ENCODE measurements at regions of chr10 and their contacts with region 1.

Region 1: GRCh38 chr10:52818019-52818418 is 45.4 kb upstream of the MBL2 start:
- DNase-seq: peak; percentile 100
- ATAC-seq: peak; percentile 82
- H3K4me3 ChIP-seq: no peak overlapping the region
- H3K27ac ChIP-seq: no peak overlapping the region
- H3K4me1 ChIP-seq: peaks cover 21% of the 10 kb centered on the region
- H3K27me3 ChIP-seq: no peaks in the 10 kb centered on the region
- CTCF ChIP-seq: peak; percentile 100

Region 2: DNA sequence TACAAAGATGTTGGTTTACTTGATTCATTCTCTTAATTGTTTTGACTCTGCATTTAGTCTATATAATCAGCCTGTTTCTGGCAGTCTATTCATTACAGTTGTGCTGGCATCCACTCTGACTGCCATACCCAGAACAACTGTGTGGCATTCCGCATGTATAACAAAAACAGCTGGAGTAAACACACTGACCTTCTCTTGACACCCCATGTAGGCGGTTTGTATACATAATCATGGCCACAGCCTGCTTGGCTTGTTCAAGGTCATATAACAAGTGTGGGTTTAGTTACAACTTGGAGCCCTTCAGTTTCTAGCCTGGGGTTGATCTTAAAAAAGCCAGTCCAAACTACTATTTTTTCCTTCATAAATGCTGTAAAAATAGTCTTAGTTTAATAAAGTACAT is 116.4 kb before region 1 on chr10:
- CTCF ChIA-PET with region 1: no interaction called
- POLR2A ChIA-PET with region 1: no interaction called
- intact Hi-C with region 1: no loop called
- DNase-seq: no peak
- ATAC-seq: no peak
- H3K4me3 ChIP-seq: no peak overlapping the region
- H3K27ac ChIP-seq: no peak overlapping the region
- H3K4me1 ChIP-seq: peaks cover 32% of the 10 kb centered on the region
- H3K27me3 ChIP-seq: no peaks in the 10 kb centered on the region
- CTCF ChIP-seq: no peak

Region 3: GRCh38 chr10:52779541-52780390 is 38.3 kb before region 1 on chr10:
- CTCF ChIA-PET with region 1: interaction called, 19 read pairs
- POLR2A ChIA-PET with region 1: no interaction called
- intact Hi-C with region 1: no loop called
- DNase-seq: peak; percentile 99
- ATAC-seq: peak; percentile 94
- H3K4me3 ChIP-seq: no peak overlapping the region
- H3K27ac ChIP-seq: no peak overlapping the region
- H3K4me1 ChIP-seq: no peaks in the 10 kb centered on the region
- H3K27me3 ChIP-seq: no peaks in the 10 kb centered on the region
- CTCF ChIP-seq: peak; percentile 100

Region 4: GRCh38 chr10:52864201-52865106 is 46.4 kb after region 1 on chr10:
- CTCF ChIA-PET with region 1: interaction called, 61 read pairs
- POLR2A ChIA-PET with region 1: interaction called, 8 read pairs
- intact Hi-C with region 1: loop called (anchors 1 kb)
- DNase-seq: peak; percentile 100
- ATAC-seq: peak; percentile 100
- H3K4me3 ChIP-seq: no peak overlapping the region
- H3K27ac ChIP-seq: peak overlapping the region; percentile 81
- H3K4me1 ChIP-seq: peaks cover 22% of the 10 kb centered on the region
- H3K27me3 ChIP-seq: no peaks in the 10 kb centered on the region
- CTCF ChIP-seq: no peak

Region 5: DNA sequence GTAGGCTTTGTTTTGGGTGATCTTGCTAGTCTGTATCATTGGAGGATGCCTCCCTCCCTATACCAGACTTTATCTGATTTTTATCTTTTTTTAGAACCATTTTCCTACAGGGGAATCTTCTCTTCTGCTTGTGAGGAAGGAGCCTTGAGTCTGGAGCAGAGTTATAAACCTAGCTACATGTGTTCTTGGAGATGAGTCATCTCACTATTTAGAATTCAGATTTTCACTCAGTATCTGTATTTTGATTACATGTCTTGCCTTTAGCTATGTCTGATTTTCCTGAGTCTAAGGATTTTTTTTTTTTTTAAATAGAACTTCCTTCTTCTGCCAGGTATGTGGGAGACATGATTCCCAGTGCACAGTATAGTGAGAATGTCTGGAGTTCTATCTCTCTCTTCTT is 166.2 kb after region 1 on chr10:
- CTCF ChIA-PET with region 1: no interaction called
- POLR2A ChIA-PET with region 1: no interaction called
- intact Hi-C with region 1: no loop called
- DNase-seq: no peak
- ATAC-seq: peak; percentile 75
- H3K4me3 ChIP-seq: no peak overlapping the region
- H3K27ac ChIP-seq: no peak overlapping the region
- H3K4me1 ChIP-seq: no peaks in the 10 kb centered on the region
- H3K27me3 ChIP-seq: no peaks in the 10 kb centered on the region
- CTCF ChIP-seq: no peak

Region 6: GRCh38 chr10:53025172-53025711 is 207.2 kb after region 1 on chr10:
- CTCF ChIA-PET with region 1: interaction called, 4 read pairs
- POLR2A ChIA-PET with region 1: no interaction called
- intact Hi-C with region 1: loop called (anchors 2 kb)
- DNase-seq: peak; percentile 85
- ATAC-seq: peak; percentile 81
- H3K4me3 ChIP-seq: peak overlapping the region; percentile 60
- H3K27ac ChIP-seq: peak overlapping the region; percentile 9
- H3K4me1 ChIP-seq: peaks cover 40% of the 10 kb centered on the region
- H3K27me3 ChIP-seq: no peaks in the 10 kb centered on the region
- CTCF ChIP-seq: no peak

Region 7: GRCh38 chr10:53209944-53210611 is 392.1 kb after region 1 on chr10:
- CTCF ChIA-PET with region 1: interaction called, 13 read pairs
- POLR2A ChIA-PET with region 1: no interaction called
- intact Hi-C with region 1: loop called (anchors 1 kb)
- DNase-seq: peak; percentile 97
- ATAC-seq: peak; percentile 96
- H3K4me3 ChIP-seq: no peak overlapping the region
- H3K27ac ChIP-seq: no peak overlapping the region
- H3K4me1 ChIP-seq: no peaks in the 10 kb centered on the region
- H3K27me3 ChIP-seq: no peaks in the 10 kb centered on the region
- CTCF ChIP-seq: peak; percentile 99

Region 8: GRCh38 chr10:53846809-53847208 is 1028.8 kb after region 1 on chr10:
- CTCF ChIA-PET with region 1: interaction called, 4 read pairs
- POLR2A ChIA-PET with region 1: no interaction called
- intact Hi-C with region 1: loop called (anchors 5 kb)
- DNase-seq: peak; percentile 37
- ATAC-seq: peak; percentile 73
- H3K4me3 ChIP-seq: no peak overlapping the region
- H3K27ac ChIP-seq: no peak overlapping the region
- H3K4me1 ChIP-seq: 0 out of 2 replicates have a peak, but pooled peaks cover 4% of the 10 kb centered on the region
- H3K27me3 ChIP-seq: no peaks in the 10 kb centered on the region
- CTCF ChIP-seq: peak; percentile 72

Region 9: GRCh38 chr10:54402576-54402975 is 1584.6 kb after region 1 on chr10:
- CTCF ChIA-PET with region 1: no interaction called
- POLR2A ChIA-PET with region 1: no interaction called
- intact Hi-C with region 1: loop called (anchors 2 kb)
- DNase-seq: peak; percentile 76
- ATAC-seq: peak; percentile 76
- H3K4me3 ChIP-seq: no peak overlapping the region
- H3K27ac ChIP-seq: no peak overlapping the region
- H3K4me1 ChIP-seq: no peaks in the 10 kb centered on the region
- H3K27me3 ChIP-seq: no peaks in the 10 kb centered on the region
- CTCF ChIP-seq: peak; percentile 92

Measured in PC-3 (cell line).